ENCODE measurements at regions of chr10 and their contacts with region 1.

Region 1: GRCh38 chr10:63157845-63158624 is 24.9 kb downstream of the NRBF2 start:
- DNase-seq: peak; percentile 84
- ATAC-seq: peak; percentile 83
- H3K4me3 ChIP-seq: no peak overlapping the region
- H3K27ac ChIP-seq: no peak overlapping the region
- H3K4me1 ChIP-seq: no peaks in the 10 kb centered on the region
- H3K27me3 ChIP-seq: no peaks in the 10 kb centered on the region; a peak in 1 of 5 replicates
- CTCF ChIP-seq: peak; percentile 84
- EP300 ChIP-seq: no peak
- POLR2A ChIP-seq: no peak
- RAD21 ChIP-seq: peak; percentile 81

Region 2: DNA sequence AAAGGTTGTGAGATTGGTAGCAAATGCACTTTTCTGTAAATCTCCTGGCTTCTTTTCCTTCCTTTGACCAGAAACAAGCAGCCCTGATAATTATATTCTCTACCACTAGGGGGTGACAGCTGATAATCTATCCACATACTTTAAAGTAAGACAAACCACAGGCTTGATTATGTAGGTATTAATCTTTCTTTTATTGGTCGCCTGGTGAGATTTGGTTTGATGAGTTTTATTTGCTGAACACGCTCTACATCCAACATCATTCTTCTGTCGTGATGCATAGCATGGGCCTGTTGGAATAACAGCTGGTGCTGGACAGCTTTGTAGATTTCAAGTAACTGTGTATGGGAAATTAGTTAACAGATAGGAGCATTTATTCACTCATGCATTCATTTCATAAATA is 720.3 kb before region 1 on chr10:
- CTCF ChIA-PET with region 1: interaction called, 3 read pairs
- POLR2A ChIA-PET with region 1: no interaction called
- in situ Hi-C with region 1: no loop called
- intact Hi-C with region 1: loop called (anchors 1 kb)
- DNase-seq: peak; percentile 41
- ATAC-seq: peak; percentile 62
- H3K4me3 ChIP-seq: no peak overlapping the region
- H3K27ac ChIP-seq: no peak overlapping the region
- H3K4me1 ChIP-seq: no peaks in the 10 kb centered on the region
- H3K27me3 ChIP-seq: 0 out of 5 replicates have a peak, but pooled peaks cover 0 to 2% of the 10 kb centered on the region in 2 experiments
- CTCF ChIP-seq: peak; percentile 70
- EP300 ChIP-seq: no peak
- POLR2A ChIP-seq: no peak
- RAD21 ChIP-seq: no peak

Region 3: GRCh38 chr10:62594093-62594520 is 563.9 kb before region 1 on chr10:
- CTCF ChIA-PET with region 1: interaction called, 22 read pairs
- POLR2A ChIA-PET with region 1: no interaction called
- in situ Hi-C with region 1: loop called (anchors 5 kb)
- intact Hi-C with region 1: loop called (anchors 1 kb)
- DNase-seq: peak; percentile 27
- ATAC-seq: peak; percentile 94
- H3K4me3 ChIP-seq: no peak overlapping the region
- H3K27ac ChIP-seq: no peak overlapping the region
- H3K4me1 ChIP-seq: no peaks in the 10 kb centered on the region
- H3K27me3 ChIP-seq: no peaks in the 10 kb centered on the region
- CTCF ChIP-seq: peak; percentile 85
- EP300 ChIP-seq: no peak
- POLR2A ChIP-seq: no peak
- RAD21 ChIP-seq: peak; percentile 69

Region 4: GRCh38 chr10:62610649-62611229 is 547.3 kb before region 1 on chr10:
- CTCF ChIA-PET with region 1: no interaction called
- POLR2A ChIA-PET with region 1: no interaction called
- in situ Hi-C with region 1: no loop called
- intact Hi-C with region 1: loop called (anchors 5 kb)
- DNase-seq: peak; percentile 35
- ATAC-seq: peak; percentile 95
- H3K4me3 ChIP-seq: no peak overlapping the region
- H3K27ac ChIP-seq: no peak overlapping the region
- H3K4me1 ChIP-seq: no peaks in the 10 kb centered on the region
- H3K27me3 ChIP-seq: no peaks in the 10 kb centered on the region
- CTCF ChIP-seq: peak; percentile 88
- EP300 ChIP-seq: no peak
- POLR2A ChIP-seq: no peak
- RAD21 ChIP-seq: peak; percentile 80

Region 5: DNA sequence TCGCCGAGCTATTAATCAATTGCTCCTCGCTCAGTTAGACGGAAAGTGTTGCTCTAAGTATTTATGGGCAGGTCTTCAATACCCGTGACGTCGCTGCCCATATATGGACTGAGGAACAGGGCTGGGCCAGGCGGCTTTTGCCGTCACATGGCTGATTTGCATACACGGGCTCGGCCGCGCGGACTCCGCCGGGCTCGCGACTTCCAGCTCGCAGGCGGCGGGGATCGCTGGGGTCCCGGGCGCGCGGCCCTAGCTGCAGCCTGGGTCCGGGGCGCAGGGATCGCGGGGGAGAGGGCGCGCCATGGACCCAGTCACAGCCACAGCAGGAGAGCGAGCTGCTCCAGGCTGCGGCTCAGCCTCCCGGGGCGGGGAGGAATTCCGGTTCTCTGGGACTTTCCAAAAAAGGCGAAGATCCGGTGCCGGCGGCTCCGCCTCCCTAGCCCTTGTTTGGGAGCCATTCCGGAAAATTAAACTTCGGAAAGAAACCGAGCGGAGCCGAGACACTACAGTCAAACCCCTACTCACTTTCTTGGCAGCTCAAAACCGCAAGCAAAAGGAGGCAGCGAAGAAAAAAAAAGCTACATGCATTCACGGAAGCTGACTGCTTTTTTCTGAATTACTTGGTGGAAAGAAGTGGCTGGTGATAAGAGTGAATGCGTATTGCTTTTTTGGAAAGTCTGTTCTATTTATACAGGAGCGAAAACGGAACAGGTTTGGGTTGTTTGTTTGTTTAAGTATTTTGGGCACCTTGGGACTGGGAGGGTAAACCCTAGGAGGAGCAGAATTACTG is 341.5 kb before region 1 on chr10 and contains the start of gene EGR2:
- CTCF ChIA-PET with region 1: no interaction called
- POLR2A ChIA-PET with region 1: no interaction called
- in situ Hi-C with region 1: no loop called
- intact Hi-C with region 1: loop called (anchors 1 kb)
- DNase-seq: peak; percentile 86
- ATAC-seq: peak; percentile 84
- H3K4me3 ChIP-seq: peak within 1 kb of the TSS; percentile 61 to 75 (median 65)
- H3K27ac ChIP-seq: no peak within 1 kb of the TSS
- H3K4me1 ChIP-seq: peaks cover 23% of the 10 kb centered on the region
- H3K27me3 ChIP-seq: peaks cover 7 to 23% of the 10 kb centered on the region in 2 experiments; a peak in 4 of 5 replicates
- CTCF ChIP-seq: 0 out of 2 replicates have a peak, but pooled peaks have one; percentile 8
- EP300 ChIP-seq: no peak
- POLR2A ChIP-seq: no peak
- RAD21 ChIP-seq: no peak
- total RNA-seq, gene EGR2: 0.11 TPM in 1 of 2 replicates, not detected in the other

Region 6: GRCh38 chr10:63003816-63004453 is 154.1 kb before region 1 on chr10:
- CTCF ChIA-PET with region 1: interaction called, 3 read pairs
- POLR2A ChIA-PET with region 1: no interaction called
- in situ Hi-C with region 1: no loop called
- intact Hi-C with region 1: loop called (anchors 1 kb)
- DNase-seq: no peak
- ATAC-seq: no peak
- H3K4me3 ChIP-seq: no peak overlapping the region
- H3K27ac ChIP-seq: no peak overlapping the region
- H3K4me1 ChIP-seq: no peaks in the 10 kb centered on the region
- H3K27me3 ChIP-seq: no peaks in the 10 kb centered on the region; a peak in 1 of 5 replicates
- CTCF ChIP-seq: no peak
- EP300 ChIP-seq: no peak
- POLR2A ChIP-seq: no peak
- RAD21 ChIP-seq: no peak

Region 7: DNA sequence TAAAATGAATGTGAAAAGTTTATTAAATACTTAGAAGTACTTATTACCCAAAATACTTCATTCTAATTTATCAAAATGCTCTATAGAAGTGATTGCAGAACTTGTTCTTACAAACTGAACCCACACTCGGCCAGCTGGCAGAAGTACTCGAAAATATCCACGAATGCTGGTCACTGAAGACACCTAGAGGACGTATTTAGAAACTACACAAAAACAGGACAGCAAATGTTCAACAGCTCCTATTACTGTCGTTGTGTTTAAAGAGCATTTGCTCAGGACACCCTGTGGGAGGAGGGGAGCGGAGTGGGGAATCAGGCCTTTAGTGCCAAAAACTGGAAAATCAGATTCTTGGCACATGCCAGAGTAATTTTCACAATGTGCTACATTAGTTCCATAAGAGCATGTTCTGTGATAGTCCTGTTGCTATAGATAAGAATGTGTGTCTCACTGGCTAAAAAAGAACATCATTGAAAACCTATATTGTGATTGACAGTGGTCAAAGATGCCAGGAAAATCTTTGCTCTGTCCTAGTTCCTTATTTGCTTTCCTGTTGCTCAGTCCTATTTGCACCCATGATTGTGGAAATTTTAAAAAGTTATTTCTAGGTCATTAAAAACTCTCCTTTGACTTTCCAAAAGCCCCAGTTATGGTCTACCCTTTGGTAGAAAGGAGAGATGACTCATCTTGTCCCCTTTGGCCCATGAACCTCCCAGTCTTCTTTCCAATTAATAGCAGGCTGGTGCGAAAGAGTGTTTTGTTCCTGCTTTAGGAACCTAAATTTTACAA is 73.9 kb before region 1 on chr10:
- CTCF ChIA-PET with region 1: no interaction called
- POLR2A ChIA-PET with region 1: no interaction called
- in situ Hi-C with region 1: no loop called
- intact Hi-C with region 1: loop called (anchors 2 kb)
- DNase-seq: peak; percentile 62
- ATAC-seq: peak; percentile 93
- H3K4me3 ChIP-seq: no peak overlapping the region
- H3K27ac ChIP-seq: no peak overlapping the region
- H3K4me1 ChIP-seq: no peaks in the 10 kb centered on the region
- H3K27me3 ChIP-seq: no peaks in the 10 kb centered on the region
- CTCF ChIP-seq: peak; percentile 78
- EP300 ChIP-seq: no peak
- POLR2A ChIP-seq: no peak
- RAD21 ChIP-seq: peak; percentile 46; the same call in 1 of the 2 replicates

Region 8: DNA sequence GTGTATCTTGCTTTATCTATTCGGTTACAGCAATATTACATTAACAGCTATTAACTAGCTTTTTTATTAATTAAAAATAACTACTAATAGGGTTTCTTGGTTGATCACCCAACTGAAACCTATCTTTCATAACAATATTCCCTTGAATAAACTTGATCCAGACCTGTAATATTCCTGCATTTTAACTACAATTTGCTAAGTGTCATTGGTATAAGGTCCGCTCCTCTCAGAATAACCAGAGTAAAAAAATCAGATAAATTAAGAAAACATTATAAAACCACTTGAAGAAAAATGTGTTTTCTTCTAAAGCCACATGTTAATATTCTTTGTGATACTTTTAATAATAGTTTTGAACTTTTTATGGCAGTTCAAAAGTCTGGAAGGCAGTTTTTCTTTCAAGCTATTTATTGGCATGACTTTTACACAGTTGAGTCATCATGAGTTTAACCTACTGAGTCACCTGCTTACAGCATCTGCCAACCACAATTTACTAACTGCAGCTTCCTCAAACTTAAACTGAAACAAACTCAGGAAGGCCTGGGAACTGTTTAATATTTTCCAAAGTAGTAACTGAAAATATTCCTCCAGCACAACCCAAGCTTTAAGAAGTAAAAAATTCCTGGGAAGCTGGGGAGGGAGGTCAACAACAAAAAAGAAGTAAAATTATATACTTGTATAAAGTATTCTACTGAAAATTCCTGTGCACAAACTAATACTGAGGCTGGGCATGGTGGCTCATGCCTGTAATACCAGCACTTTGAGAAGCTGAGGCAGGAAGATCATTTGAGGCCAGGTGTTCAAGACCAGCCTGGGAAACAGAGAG is 78.3 kb after region 1 on chr10:
- CTCF ChIA-PET with region 1: no interaction called
- POLR2A ChIA-PET with region 1: no interaction called
- in situ Hi-C with region 1: no loop called
- intact Hi-C with region 1: no loop called
- DNase-seq: peak; percentile 44
- ATAC-seq: peak; percentile 69
- H3K4me3 ChIP-seq: no peak overlapping the region
- H3K27ac ChIP-seq: peak overlapping the region; percentile 26
- H3K4me1 ChIP-seq: peaks cover 11% of the 10 kb centered on the region; the same call in 1 of the 2 replicates
- H3K27me3 ChIP-seq: no peaks in the 10 kb centered on the region
- CTCF ChIP-seq: no peak
- EP300 ChIP-seq: no peak
- POLR2A ChIP-seq: no peak
- RAD21 ChIP-seq: no peak